Endothelial cell of umbilical vein (primary cell): ENCODE measurements at regions of chr7 and their contacts with region 1.

Region 1: GRCh38 chr7:94183289-94183749 is 179.2 kb upstream of the BET1 start:
- DNase-seq: peak; percentile 99
- H3K4me3 ChIP-seq: no peak overlapping the region
- H3K27ac ChIP-seq: peak overlapping the region; percentile 98
- H3K4me1 ChIP-seq: peaks cover 49% of the 10 kb centered on the region
- H3K27me3 ChIP-seq: no peaks in the 10 kb centered on the region
- CTCF ChIP-seq: no peak
- POLR2A ChIP-seq: no peak

Region 2: GRCh38 chr7:93921607-93922566 is 261.4 kb before region 1 on chr7 and contains the start of gene GNG11:
- CTCF ChIA-PET with region 1: no interaction called
- POLR2A ChIA-PET with region 1: no interaction called
- dilution Hi-C with region 1: no loop called
- intact Hi-C with region 1: loop called (anchors 1 kb)
- DNase-seq: peak; percentile 90
- H3K4me3 ChIP-seq: peak within 1 kb of the TSS; percentile 95 to 100 (median 100)
- H3K27ac ChIP-seq: peak within 1 kb of the TSS; percentile 99
- H3K4me1 ChIP-seq: peaks cover 25% of the 10 kb centered on the region
- H3K27me3 ChIP-seq: no peaks in the 10 kb centered on the region
- CTCF ChIP-seq: no peak
- POLR2A ChIP-seq: peak; percentile 86
- total RNA-seq, gene GNG11: 208 and 215 TPM in 2 replicates

Region 3: GRCh38 chr7:93958216-93958615 is 225.1 kb before region 1 on chr7:
- CTCF ChIA-PET with region 1: no interaction called
- POLR2A ChIA-PET with region 1: no interaction called
- dilution Hi-C with region 1: no loop called
- intact Hi-C with region 1: no loop called
- DNase-seq: peak; percentile 86
- H3K4me3 ChIP-seq: peak overlapping the region in 2 of 3 experiments; percentile 16 to 37
- H3K27ac ChIP-seq: peak overlapping the region; percentile 93
- H3K4me1 ChIP-seq: peaks cover 21% of the 10 kb centered on the region
- H3K27me3 ChIP-seq: no peaks in the 10 kb centered on the region
- CTCF ChIP-seq: no peak
- POLR2A ChIP-seq: no peak

Region 4: GRCh38 chr7:94004024-94004951 is 179.0 kb before region 1 on chr7 and contains the start of gene BET1:
- CTCF ChIA-PET with region 1: no interaction called
- POLR2A ChIA-PET with region 1: no interaction called
- dilution Hi-C with region 1: no loop called
- intact Hi-C with region 1: loop called (anchors 1 kb)
- DNase-seq: peak; percentile 96
- H3K4me3 ChIP-seq: peak within 1 kb of the TSS; percentile 85 to 95 (median 87)
- H3K27ac ChIP-seq: peak within 1 kb of the TSS; percentile 76
- H3K4me1 ChIP-seq: peaks cover 16% of the 10 kb centered on the region
- H3K27me3 ChIP-seq: peaks cover 10 to 23% of the 10 kb centered on the region in 2 experiments
- CTCF ChIP-seq: no peak
- POLR2A ChIP-seq: peak; percentile 66
- total RNA-seq, gene BET1: 23.9 and 28.4 TPM in 2 replicates

Region 5: GRCh38 chr7:94129443-94130140 is 53.7 kb before region 1 on chr7:
- CTCF ChIA-PET with region 1: no interaction called
- POLR2A ChIA-PET with region 1: no interaction called
- dilution Hi-C with region 1: no loop called
- intact Hi-C with region 1: loop called (anchors 1 kb)
- DNase-seq: peak; percentile 84
- H3K4me3 ChIP-seq: no peak overlapping the region
- H3K27ac ChIP-seq: peak overlapping the region; percentile 57
- H3K4me1 ChIP-seq: peaks cover 16% of the 10 kb centered on the region
- H3K27me3 ChIP-seq: no peaks in the 10 kb centered on the region
- CTCF ChIP-seq: no peak
- POLR2A ChIP-seq: no peak

Region 6: GRCh38 chr7:94258418-94259300 is 75.3 kb after region 1 on chr7:
- CTCF ChIA-PET with region 1: no interaction called
- POLR2A ChIA-PET with region 1: no interaction called
- dilution Hi-C with region 1: no loop called
- intact Hi-C with region 1: no loop called
- DNase-seq: no peak
- H3K4me3 ChIP-seq: no peak overlapping the region
- H3K27ac ChIP-seq: no peak overlapping the region
- H3K4me1 ChIP-seq: no peaks in the 10 kb centered on the region
- H3K27me3 ChIP-seq: no peaks in the 10 kb centered on the region
- CTCF ChIP-seq: no peak
- POLR2A ChIP-seq: no peak

Region 7: GRCh38 chr7:94280836-94281235 is 97.5 kb after region 1 on chr7:
- CTCF ChIA-PET with region 1: no interaction called
- POLR2A ChIA-PET with region 1: no interaction called
- dilution Hi-C with region 1: no loop called
- intact Hi-C with region 1: no loop called
- DNase-seq: peak; percentile 51
- H3K4me3 ChIP-seq: no peak overlapping the region
- H3K27ac ChIP-seq: no peak overlapping the region
- H3K4me1 ChIP-seq: no peaks in the 10 kb centered on the region
- H3K27me3 ChIP-seq: peaks cover 0 to 5% of the 10 kb centered on the region in 2 experiments
- CTCF ChIP-seq: no peak
- POLR2A ChIP-seq: no peak

Region 8: DNA sequence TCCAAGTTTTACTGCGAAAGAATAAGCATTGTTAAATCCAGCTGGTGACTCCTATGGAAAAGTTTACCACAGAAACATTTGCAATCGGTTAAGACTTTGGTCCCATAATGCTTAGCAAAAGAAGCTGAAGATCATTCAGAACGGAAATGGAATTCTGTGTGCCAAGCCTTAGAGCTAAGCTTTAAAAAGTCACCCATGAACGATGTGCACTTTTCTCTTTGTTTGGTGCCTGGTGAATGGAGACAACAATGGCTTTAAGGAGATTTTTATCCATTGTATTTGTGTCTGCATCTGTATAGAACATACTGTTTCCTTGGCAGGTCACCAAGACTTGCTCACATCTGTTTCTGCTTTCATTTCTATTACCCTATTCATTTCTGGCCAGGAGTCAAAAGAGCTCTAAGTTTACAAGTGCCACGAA is 185.1 kb after region 1 on chr7:
- CTCF ChIA-PET with region 1: no interaction called
- POLR2A ChIA-PET with region 1: no interaction called
- dilution Hi-C with region 1: no loop called
- intact Hi-C with region 1: loop called (anchors 1 kb)
- DNase-seq: peak; percentile 97
- H3K4me3 ChIP-seq: peak overlapping the region in 1 of 3 experiments; percentile 30
- H3K27ac ChIP-seq: peak overlapping the region; percentile 88
- H3K4me1 ChIP-seq: peaks cover 15% of the 10 kb centered on the region
- H3K27me3 ChIP-seq: no peaks in the 10 kb centered on the region
- CTCF ChIP-seq: no peak
- POLR2A ChIP-seq: no peak

Region 9: GRCh38 chr7:94697035-94697974 is 514.0 kb after region 1 on chr7:
- CTCF ChIA-PET with region 1: no interaction called
- POLR2A ChIA-PET with region 1: no interaction called
- dilution Hi-C with region 1: no loop called
- intact Hi-C with region 1: loop called (anchors 2 kb)
- DNase-seq: peak; percentile 90
- H3K4me3 ChIP-seq: no peak overlapping the region
- H3K27ac ChIP-seq: peak overlapping the region; percentile 83
- H3K4me1 ChIP-seq: peaks cover 43% of the 10 kb centered on the region
- H3K27me3 ChIP-seq: no peaks in the 10 kb centered on the region
- CTCF ChIP-seq: no peak
- POLR2A ChIP-seq: no peak